HepG2 (cell line): ENCODE measurements at regions of chr13 and their contacts with region 1.

Region 1: GRCh38 chr13:39616087-39616694 is 13.2 kb upstream of the LHFPL6 start:
- DNase-seq: peak; percentile 56
- ATAC-seq: peak; percentile 90
- H3K4me3 ChIP-seq: no peak overlapping the region
- H3K27ac ChIP-seq: no peak overlapping the region
- H3K4me1 ChIP-seq: no peaks in the 10 kb centered on the region
- H3K27me3 ChIP-seq: no peaks in the 10 kb centered on the region; a peak in 1 of 5 replicates
- CTCF ChIP-seq: peak; percentile 78
- EP300 ChIP-seq: no peak
- POLR2A ChIP-seq: no peak
- RAD21 ChIP-seq: no peak

Region 2: DNA sequence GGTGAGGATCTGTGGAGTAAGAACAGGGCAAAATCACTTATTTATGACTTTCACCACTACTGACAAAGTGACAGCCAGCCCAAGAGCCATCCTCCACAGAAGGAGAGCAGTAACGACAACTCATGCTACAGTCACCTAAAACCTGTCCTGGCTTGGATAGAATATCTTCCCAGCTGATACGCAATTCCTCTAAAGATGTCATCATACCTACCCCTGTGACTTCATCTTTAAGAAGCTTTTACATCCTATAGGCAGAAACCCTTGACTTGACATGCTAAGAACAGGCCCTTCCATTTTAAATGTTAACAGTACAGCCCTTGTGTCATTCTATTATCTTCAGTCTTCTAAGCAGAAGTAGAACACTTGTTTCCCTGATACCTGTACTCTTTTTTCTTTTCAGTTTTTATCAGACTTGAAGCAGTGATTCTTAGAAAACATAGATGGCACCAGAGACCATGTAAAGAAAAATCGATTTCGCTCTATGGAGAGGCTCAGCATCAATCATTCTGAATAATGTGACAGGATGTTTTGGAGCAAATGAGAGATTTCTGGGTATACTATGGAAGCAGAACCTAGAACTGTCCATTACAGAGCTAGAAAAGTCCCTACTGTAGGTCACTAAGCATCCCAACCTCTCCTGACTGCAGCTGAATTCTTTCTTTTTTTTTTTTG is 645.7 kb before region 1 on chr13:
- CTCF ChIA-PET with region 1: interaction called, 3 read pairs
- POLR2A ChIA-PET with region 1: no interaction called
- in situ Hi-C with region 1: loop called (anchors 25 kb)
- intact Hi-C with region 1: loop called (anchors 5 kb)
- DNase-seq: no peak
- ATAC-seq: peak; percentile 52
- H3K4me3 ChIP-seq: no peak overlapping the region
- H3K27ac ChIP-seq: no peak overlapping the region
- H3K4me1 ChIP-seq: no peaks in the 10 kb centered on the region
- H3K27me3 ChIP-seq: no peaks in the 10 kb centered on the region
- CTCF ChIP-seq: peak; percentile 50
- EP300 ChIP-seq: no peak
- POLR2A ChIP-seq: no peak
- RAD21 ChIP-seq: no peak

Region 3: DNA sequence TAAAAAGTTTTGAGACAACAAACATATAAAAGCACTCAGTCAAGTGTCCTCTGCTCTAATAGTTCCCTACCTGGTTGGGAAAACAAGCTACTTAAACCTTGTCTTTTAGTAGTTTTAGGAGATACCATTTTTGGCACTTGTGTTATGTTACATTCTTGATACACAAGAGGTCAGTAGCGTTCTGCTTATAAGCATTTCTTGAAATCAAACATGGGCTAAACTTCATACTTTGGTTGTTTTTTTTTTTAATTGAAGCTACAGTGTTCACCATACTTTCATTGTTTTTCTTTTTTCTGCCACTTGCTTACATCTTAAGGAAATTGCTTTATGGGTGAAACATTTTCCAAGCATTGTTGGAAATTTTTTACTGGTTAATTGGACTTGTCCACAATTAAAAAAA is 565.0 kb before region 1 on chr13:
- CTCF ChIA-PET with region 1: interaction called, 10 read pairs
- POLR2A ChIA-PET with region 1: no interaction called
- in situ Hi-C with region 1: loop called (anchors 25 kb)
- intact Hi-C with region 1: loop called (anchors 1 kb)
- DNase-seq: peak; percentile 13
- ATAC-seq: no peak
- H3K4me3 ChIP-seq: no peak overlapping the region
- H3K27ac ChIP-seq: no peak overlapping the region
- H3K4me1 ChIP-seq: no peaks in the 10 kb centered on the region
- H3K27me3 ChIP-seq: no peaks in the 10 kb centered on the region
- CTCF ChIP-seq: peak; percentile 32; the same call in 1 of the 2 replicates
- EP300 ChIP-seq: no peak
- POLR2A ChIP-seq: no peak
- RAD21 ChIP-seq: no peak

Region 4: DNA sequence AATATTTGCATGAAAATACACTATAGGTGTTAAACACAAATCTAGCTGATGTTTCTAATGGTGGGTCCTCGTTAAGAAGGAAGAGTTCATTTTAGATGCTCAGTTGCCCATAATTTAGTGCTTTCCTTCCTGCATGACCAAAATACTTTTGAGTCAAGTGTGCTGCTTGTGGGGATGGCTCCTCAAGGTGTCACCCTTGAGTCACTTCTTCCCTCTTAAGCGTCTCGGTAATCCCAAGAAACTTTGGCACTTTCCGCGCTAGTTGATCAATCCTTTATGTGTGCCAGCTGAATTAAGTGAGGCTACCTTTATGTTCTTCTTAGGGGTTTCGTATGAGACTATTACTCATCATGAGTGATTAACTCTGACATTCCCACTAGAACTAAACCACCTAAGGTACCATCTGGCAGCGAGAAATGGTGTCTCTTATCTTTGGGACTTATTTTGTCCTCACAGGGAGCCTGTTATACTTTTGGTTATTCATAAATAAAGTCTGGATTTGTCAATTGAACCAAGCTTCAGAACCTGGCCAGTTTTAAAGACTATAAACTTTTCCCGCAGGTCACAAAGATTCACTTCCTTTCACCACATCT is 471.2 kb before region 1 on chr13:
- CTCF ChIA-PET with region 1: no interaction called
- POLR2A ChIA-PET with region 1: no interaction called
- in situ Hi-C with region 1: no loop called
- intact Hi-C with region 1: loop called (anchors 1 kb)
- DNase-seq: no peak
- ATAC-seq: peak; percentile 44; the same call in 1 of the 3 replicates
- H3K4me3 ChIP-seq: no peak overlapping the region
- H3K27ac ChIP-seq: no peak overlapping the region
- H3K4me1 ChIP-seq: no peaks in the 10 kb centered on the region
- H3K27me3 ChIP-seq: no peaks in the 10 kb centered on the region
- CTCF ChIP-seq: peak; percentile 61
- EP300 ChIP-seq: no peak
- POLR2A ChIP-seq: no peak
- RAD21 ChIP-seq: no peak

Region 5: DNA sequence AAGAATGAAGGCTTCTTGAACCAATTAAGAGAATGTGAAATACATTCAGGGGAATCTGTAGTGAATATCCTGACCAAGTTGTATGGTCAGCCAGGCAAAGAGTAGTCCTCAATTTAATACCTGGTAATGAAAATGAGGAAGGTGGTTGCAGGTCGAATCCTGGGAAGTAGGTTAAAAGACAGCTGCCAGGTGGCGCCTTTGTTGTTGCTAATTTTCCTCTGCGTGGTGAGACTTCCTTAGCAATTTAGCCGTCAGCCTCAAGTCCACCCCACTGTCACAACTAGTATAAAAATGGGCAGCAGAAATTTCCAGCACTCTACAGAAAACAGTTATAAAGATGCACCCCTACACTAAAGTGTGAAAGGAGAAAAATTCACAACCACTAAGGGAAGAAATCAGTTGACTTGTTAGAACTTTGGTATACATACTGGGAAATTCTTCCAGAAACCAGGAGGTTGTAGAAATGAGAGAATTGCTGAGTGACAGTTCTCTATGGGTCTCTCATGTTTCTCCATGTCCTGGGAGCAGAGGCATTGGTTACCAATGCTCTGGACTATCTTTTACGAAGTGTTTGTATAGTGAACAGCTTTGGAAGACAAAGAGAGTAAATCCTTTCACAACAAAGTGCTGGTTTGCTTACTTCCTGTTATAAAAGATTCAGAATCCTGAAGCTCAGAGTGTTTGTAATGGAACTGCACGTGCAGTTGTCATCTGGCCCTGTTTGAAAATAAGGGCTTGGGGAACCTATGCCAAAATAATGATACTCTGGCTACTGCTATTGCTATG is 342.0 kb before region 1 on chr13:
- CTCF ChIA-PET with region 1: interaction called, 3 read pairs
- POLR2A ChIA-PET with region 1: no interaction called
- in situ Hi-C with region 1: loop called (anchors 25 kb)
- intact Hi-C with region 1: loop called (anchors 2 kb)
- DNase-seq: no peak
- ATAC-seq: no peak
- H3K4me3 ChIP-seq: no peak overlapping the region
- H3K27ac ChIP-seq: no peak overlapping the region
- H3K4me1 ChIP-seq: no peaks in the 10 kb centered on the region
- H3K27me3 ChIP-seq: no peaks in the 10 kb centered on the region
- CTCF ChIP-seq: no peak
- EP300 ChIP-seq: no peak
- POLR2A ChIP-seq: no peak
- RAD21 ChIP-seq: no peak

Region 6: GRCh38 chr13:39415008-39415802 is 201.0 kb before region 1 on chr13:
- CTCF ChIA-PET with region 1: no interaction called
- POLR2A ChIA-PET with region 1: no interaction called
- in situ Hi-C with region 1: no loop called
- intact Hi-C with region 1: loop called (anchors 10 kb)
- DNase-seq: peak; percentile 1
- ATAC-seq: peak; percentile 59; the same call in 2 of the 3 replicates
- H3K4me3 ChIP-seq: no peak overlapping the region
- H3K27ac ChIP-seq: no peak overlapping the region
- H3K4me1 ChIP-seq: peaks cover 11% of the 10 kb centered on the region; the same call in 1 of the 2 replicates
- H3K27me3 ChIP-seq: peaks cover 0 to 6% of the 10 kb centered on the region in 2 experiments; a peak in 1 of 5 replicates
- CTCF ChIP-seq: 0 out of 2 replicates have a peak, but pooled peaks have one; percentile 9
- EP300 ChIP-seq: no peak
- POLR2A ChIP-seq: no peak
- RAD21 ChIP-seq: no peak